Activated T-helper 1 cell treated with anti-CD3 and anti-CD28 coated beads, Interleukin-12 subunit alpha, Interleukin-12 subunit beta, Interleukin-2, Interleukin-4 antibody, amounts not matched to agents 30 ng/mL and 10 ng/mL and 1 ng/mL, durations not matched to agents 14 hours and 24 hours and 36 hours (primary cell): ENCODE measurements at regions of chr12 and their contacts with region 1.

Region 1: GRCh38 chr12:9750276-9751203 is 10.2 kb downstream of the CD69 start:
- DNase-seq: peak; percentile 55
- H3K4me3 Mint-ChIP-seq: peak overlapping the region; percentile 58
- H3K27ac Mint-ChIP-seq: peak overlapping the region; percentile 79
- H3K4me1 Mint-ChIP-seq: peaks cover 62% of the 10 kb centered on the region
- H3K27me3 Mint-ChIP-seq: no peaks in the 10 kb centered on the region

Region 2: DNA sequence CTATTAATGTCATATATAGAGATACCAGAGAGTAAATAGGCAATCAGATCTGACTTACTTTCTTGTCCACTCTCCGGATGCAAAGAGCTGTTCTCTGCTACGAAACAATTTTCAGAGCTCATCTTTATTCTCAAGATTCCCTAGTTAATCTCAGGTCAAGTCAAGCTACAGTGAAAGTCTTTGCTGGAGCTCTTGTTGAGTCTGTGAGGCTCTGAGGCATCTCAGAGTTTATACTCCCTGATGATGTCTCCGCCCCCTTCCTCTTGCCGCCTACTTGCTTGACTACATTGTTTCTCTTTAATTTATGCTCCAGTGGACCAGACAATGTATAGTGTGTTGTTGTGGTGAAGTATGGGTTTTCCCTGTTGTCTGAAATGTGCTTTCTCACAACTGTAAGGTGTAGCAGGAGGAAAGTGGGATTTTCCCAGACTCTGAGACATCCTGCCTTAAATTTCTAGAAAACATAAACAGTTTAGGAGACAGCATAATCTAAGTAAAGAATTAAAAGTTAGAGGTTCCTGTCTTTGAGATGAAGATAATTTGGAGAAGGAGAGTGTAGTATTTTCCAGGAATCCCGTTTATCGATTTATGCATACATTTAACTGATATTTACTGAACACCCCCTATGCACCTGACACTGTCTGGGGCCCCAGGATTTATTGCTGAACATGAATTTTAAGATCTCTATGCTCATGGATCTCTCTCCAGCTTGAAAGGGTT is 10.3 kb after region 1 on chr12 and contains the start of gene CD69:
- intact Hi-C with region 1: loop called (anchors 1 kb)
- DNase-seq: peak; percentile 81
- H3K4me3 Mint-ChIP-seq: peak within 1 kb of the TSS; percentile 98
- H3K27ac Mint-ChIP-seq: peak within 1 kb of the TSS; percentile 97
- H3K4me1 Mint-ChIP-seq: peaks cover 68% of the 10 kb centered on the region
- H3K27me3 Mint-ChIP-seq: peaks cover 6% of the 10 kb centered on the region
- total RNA-seq, gene CD69: 90.5 and 93.2 TPM in 2 replicates

Region 3: DNA sequence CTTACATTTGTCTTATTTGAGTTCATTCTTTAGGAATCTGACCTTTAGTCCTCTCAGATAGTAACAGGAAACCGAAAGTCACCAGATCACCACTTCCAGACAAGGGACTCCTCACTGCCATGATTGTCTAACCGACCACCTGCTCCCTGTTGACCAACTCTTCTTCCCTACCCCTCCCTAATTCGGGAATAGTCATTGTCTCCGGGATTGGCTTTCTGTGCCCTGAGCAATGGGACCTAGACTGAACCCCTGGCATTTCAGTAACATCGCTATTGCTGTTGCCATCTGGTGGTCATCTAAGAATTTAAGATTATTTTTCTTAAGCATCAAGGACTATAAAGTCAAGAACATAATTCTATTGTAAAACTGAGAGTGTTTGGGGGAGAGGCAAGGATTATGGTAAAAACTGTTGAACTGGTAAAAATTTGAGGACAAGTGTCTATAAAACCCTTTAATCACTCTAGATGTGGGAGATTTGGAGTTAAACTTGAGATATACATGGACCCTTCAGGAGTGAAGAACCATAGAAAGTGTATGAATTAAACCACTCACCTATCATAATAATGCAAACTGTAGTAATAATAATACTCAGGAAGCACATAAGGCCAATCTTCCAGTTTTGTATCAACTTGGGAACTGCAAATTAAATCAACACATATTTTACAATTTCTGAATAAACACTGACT is 175.3 kb after region 1 on chr12:
- intact Hi-C with region 1: loop called (anchors 1 kb)
- DNase-seq: no peak
- H3K4me3 Mint-ChIP-seq: peak overlapping the region; percentile 66
- H3K27ac Mint-ChIP-seq: no peak overlapping the region
- H3K4me1 Mint-ChIP-seq: peaks cover 22% of the 10 kb centered on the region
- H3K27me3 Mint-ChIP-seq: peaks cover 13% of the 10 kb centered on the region

Region 4: DNA sequence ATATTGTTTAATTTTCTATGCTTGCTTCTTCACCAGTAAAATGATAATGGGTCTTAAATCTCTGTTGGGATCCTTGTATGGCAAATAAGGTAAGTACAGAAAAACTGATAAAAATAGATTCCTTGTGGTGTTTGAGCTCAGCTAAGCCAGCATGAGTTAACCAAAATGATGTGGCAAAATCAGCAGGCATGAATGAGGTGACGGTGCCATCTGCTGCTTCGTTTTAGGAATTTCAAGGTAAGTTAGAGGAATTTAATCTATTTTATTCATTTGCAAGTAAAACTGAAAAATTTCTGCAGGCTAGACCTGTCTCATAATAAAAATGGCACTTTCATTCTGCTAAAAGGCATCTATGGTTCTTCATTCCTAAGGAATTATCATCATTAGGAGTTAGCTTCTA is 389.5 kb after region 1 on chr12:
- intact Hi-C with region 1: loop called (anchors 1 kb)
- DNase-seq: peak; percentile 25
- H3K4me3 Mint-ChIP-seq: no peak overlapping the region
- H3K27ac Mint-ChIP-seq: no peak overlapping the region
- H3K4me1 Mint-ChIP-seq: no peaks in the 10 kb centered on the region
- H3K27me3 Mint-ChIP-seq: peaks cover 46% of the 10 kb centered on the region

Region 5: DNA sequence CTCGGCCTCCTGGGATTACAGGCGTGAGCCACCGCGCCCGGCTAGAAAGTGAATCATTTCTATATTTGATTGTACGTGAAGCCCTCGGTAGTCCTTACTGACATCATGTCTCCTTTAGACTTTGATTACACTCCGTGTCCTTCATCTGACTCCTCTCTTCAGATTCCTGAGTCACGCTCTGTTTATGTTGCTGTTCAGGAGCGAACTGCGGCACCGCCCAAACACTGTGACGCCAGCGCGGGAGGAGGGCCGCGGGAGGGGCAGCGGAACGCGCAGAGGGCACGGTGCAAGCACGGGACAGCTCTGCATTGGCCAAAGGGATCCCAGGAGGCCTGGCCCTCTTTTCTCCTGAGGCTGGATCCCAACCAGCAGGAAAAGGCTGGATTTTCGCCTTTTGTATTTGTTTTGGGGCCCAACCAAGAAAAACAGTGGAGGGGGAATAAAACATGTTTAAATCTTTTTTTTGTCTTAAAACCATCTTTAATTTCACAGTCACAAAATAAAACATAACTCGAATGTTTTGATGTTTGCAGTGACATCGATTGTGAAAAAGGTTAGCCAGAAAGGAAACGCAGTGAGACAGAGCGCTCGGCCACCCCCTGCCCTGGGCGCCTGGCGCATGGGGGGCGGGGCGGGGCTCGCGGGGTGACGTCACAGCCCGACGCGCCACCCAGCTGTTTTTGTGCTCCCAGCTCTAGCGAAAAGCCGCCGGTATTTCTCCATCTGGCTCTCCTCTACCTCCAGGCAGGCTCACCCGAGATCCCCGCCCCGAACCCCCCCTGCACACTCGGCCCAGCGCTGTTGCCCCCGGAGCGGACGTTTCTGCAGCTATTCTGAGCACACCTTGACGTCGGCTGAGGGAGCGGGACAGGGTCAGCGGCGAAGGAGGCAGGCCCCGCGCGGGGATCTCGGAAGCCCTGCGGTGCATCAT is 461.9 kb after region 1 on chr12 and contains the start of gene GABARAPL1:
- intact Hi-C with region 1: loop called (anchors 5 kb)
- DNase-seq: peak; percentile 76
- H3K4me3 Mint-ChIP-seq: peak within 1 kb of the TSS; percentile 84
- H3K27ac Mint-ChIP-seq: peak within 1 kb of the TSS; percentile 93
- H3K4me1 Mint-ChIP-seq: peaks cover 32% of the 10 kb centered on the region
- H3K27me3 Mint-ChIP-seq: peaks cover 23% of the 10 kb centered on the region
- total RNA-seq, gene GABARAPL1: 5.0 and 6.6 TPM in 2 replicates